ENCODE measurements at regions of chr2 and their contacts with region 1.

Region 1: GRCh38 chr2:145323512-145323911 is 803.6 kb upstream of the ZEB2 start:
- DNase-seq: peak in 3 of 9 donors; percentile 1 to 18 (median 3)
- ATAC-seq: peak; percentile 55
- H3K4me3 ChIP-seq: no peak overlapping the region
- H3K4me3 Mint-ChIP-seq: peak overlapping the region in 1 of 10 donors; percentile 13
- H3K27ac ChIP-seq: no peak overlapping the region
- H3K27ac Mint-ChIP-seq: no peak overlapping the region
- H3K4me1 ChIP-seq: no peaks in the 10 kb centered on the region
- H3K4me1 Mint-ChIP-seq: peaks cover 0 to 22% (median 7%) of the 10 kb centered on the region in 7 donors
- H3K27me3 ChIP-seq: no peaks in the 10 kb centered on the region
- H3K27me3 Mint-ChIP-seq: peaks cover 0 to 14% (median 4%) of the 10 kb centered on the region in 5 donors

Region 2: GRCh38 chr2:145258903-145259579 is 64.5 kb before region 1 on chr2:
- CTCF ChIA-PET with region 1: no interaction called
- POLR2A ChIA-PET with region 1: no interaction called
- intact Hi-C with region 1: loop called in 1 of 2 experiments (anchors 2 kb)
- DNase-seq: peak in 6 of 9 donors; percentile 2 to 39 (median 16)
- ATAC-seq: peak; percentile 87
- H3K4me3 ChIP-seq: no peak overlapping the region
- H3K4me3 Mint-ChIP-seq: no peak overlapping the region
- H3K27ac ChIP-seq: no peak overlapping the region
- H3K27ac Mint-ChIP-seq: no peak overlapping the region
- H3K4me1 ChIP-seq: no peaks in the 10 kb centered on the region
- H3K4me1 Mint-ChIP-seq: peaks cover 0 to 8% (median 2%) of the 10 kb centered on the region in 7 donors
- H3K27me3 ChIP-seq: no peaks in the 10 kb centered on the region
- H3K27me3 Mint-ChIP-seq: peaks cover 0 to 45% (median 42%) of the 10 kb centered on the region in 5 donors

Region 3: DNA sequence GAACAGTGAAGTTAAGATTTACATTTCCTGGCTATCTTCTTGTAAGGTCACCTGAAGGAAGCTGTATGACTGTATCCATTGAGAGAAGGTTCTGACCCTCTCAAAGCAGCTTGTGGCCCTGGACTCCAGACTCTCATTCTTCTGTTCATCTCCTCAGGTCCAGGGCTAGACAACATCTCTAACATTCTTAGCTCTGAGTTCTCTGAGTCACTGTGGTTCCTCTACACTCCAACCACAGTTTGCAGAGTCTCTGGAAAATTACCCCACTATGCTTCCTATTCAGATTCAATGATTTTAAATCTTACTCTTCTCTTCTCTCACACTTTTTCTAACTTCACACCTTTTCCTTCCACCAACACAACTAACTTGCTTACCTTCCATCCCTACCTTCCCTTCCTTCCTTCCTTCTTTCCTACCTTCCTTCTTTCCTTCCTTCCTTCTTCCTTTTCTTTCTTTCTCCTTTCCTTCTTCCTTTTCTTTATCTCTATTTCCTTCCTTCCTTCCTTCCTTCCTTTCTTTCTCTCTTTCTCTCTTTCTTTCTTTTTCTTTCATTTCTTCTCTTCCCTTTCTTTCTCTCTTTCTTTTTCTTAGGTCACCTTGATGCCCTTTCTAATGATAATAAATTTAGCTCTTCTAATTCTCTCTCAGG is 20.7 kb after region 1 on chr2:
- CTCF ChIA-PET with region 1: no interaction called
- POLR2A ChIA-PET with region 1: no interaction called
- intact Hi-C with region 1: no loop called
- DNase-seq: no peak
- ATAC-seq: no peak
- H3K4me3 ChIP-seq: no peak overlapping the region
- H3K4me3 Mint-ChIP-seq: no peak overlapping the region
- H3K27ac ChIP-seq: no peak overlapping the region
- H3K27ac Mint-ChIP-seq: no peak overlapping the region
- H3K4me1 ChIP-seq: no peaks in the 10 kb centered on the region
- H3K4me1 Mint-ChIP-seq: no peaks in the 10 kb centered on the region
- H3K27me3 ChIP-seq: no peaks in the 10 kb centered on the region
- H3K27me3 Mint-ChIP-seq: peaks cover 0 to 3% (median 0%) of the 10 kb centered on the region in 5 donors